ENCODE measurements at regions of chr17 and their contacts with region 1.

Region 1: DNA sequence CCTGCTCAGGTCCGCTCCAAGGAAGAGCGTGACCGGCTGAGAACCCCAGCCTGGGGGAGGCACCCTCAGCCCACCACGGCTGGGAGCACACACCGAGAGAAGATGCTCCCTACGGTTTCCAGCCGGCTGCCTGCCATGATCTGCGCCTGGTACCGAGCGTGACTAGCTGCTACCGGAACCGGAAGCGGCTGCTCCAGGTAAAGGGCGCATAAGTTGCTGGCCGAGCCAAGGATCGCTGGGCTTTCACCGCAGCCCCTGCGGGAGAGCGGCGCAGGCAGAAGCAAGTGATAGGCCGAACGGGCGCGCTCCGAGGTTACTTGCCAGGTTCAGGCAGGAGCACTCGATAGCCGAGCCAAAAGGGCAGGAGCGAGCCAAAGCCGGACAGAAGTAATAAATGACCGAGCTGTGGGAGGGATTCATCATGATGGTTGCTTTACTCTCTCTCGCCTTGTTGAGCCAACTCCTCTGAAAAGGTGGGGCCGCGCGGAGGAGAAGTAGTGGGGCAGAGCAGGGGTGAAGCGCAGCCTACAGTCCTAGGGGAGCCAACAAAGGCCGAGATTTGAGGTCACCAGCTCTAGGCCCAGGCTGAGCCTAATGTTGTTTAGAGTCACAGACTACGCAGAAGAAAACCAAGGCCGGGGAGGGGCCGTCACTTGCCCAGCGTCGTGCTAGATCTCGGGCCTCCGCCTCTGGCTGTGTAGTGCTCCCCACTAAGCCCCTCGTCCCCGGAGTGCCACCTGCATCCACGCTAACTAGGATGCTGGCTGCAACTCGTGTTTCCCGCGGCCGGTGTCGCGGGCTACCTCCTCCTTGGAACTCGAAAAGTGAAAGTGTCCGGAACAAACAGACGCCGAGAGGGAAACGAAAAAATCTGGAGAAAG is at the start of gene MRPS23:
- DNase-seq: peak; percentile 99
- ATAC-seq: peak; percentile 98
- H3K4me3 ChIP-seq: peak within 1 kb of the TSS; percentile 73 to 79
- H3K27ac ChIP-seq: peak within 1 kb of the TSS; percentile 76 to 90
- H3K4me1 ChIP-seq: peaks cover 2 to 9% of the 10 kb centered on the region in 2 donors
- H3K27me3 ChIP-seq: no peaks in the 10 kb centered on the region
- total RNA-seq, gene MRPS23: 21.6 to 22.8 TPM

Region 2: GRCh38 chr17:58082870-58083490 is 232.9 kb after region 1 on chr17 and contains the start of gene DYNLL2:
- intact Hi-C with region 1: loop called in 1 of 2 experiments (anchors 2 kb)
- DNase-seq: peak; percentile 96 to 97
- ATAC-seq: peak; percentile 94
- H3K4me3 ChIP-seq: peak within 1 kb of the TSS; percentile 94 to 98
- H3K27ac ChIP-seq: peak within 1 kb of the TSS; percentile 88 to 98
- H3K4me1 ChIP-seq: peaks cover 3% of the 10 kb centered on the region in 2 donors
- H3K27me3 ChIP-seq: no peaks in the 10 kb centered on the region
- total RNA-seq, gene DYNLL2: 29.3 to 35.7 TPM

Region 3: DNA sequence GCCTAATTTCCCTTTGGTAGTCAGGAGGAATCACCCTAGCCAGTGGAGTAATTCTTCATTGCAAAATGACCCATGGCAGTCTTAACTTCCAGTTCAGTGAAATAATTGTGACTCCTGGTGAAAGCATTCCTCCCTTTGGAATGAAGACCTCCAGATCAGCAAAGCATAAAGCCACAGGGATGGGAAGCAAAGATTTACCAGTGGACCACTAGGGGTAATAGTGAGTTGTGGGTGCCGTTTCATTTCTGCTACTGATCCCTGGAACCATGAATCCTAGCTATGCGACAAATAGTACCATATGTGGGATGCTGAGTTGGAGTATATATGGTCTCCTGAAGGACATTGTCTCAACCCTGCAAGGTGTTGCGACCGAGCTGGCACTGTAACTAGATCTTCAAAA is 246.8 kb after region 1 on chr17:
- intact Hi-C with region 1: loop called in 1 of 2 experiments (anchors 10 kb)
- DNase-seq: no peak
- ATAC-seq: no peak
- H3K4me3 ChIP-seq: no peak overlapping the region
- H3K27ac ChIP-seq: no peak overlapping the region
- H3K4me1 ChIP-seq: no peaks in the 10 kb centered on the region
- H3K27me3 ChIP-seq: no peaks in the 10 kb centered on the region

Measured in aorta (tissue), 5 donors.